ENCODE measurements at regions of chr9 and their contacts with region 1.

Region 1: DNA sequence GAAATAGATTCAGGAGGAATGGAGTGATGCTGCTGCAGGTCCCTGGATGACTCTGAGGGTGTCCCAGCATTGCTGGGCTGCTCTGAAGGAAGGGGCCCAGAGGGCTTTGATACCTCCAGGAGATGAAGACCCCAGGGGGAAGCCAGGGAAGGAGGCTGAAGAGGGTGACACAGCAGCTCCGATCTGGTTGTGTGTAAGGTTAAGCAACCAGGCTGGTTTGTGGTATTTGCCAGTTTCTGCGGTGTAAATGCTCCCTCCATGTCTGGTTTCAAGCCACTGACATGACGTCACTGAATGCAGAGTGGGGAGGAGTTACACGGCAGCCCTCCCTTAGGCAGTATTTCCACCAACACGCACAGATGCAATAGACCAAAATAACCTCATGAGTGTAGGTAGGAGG is 40.0 kb upstream of the ORM1 start:
- DNase-seq: no peak
- ATAC-seq: no peak
- H3K4me3 ChIP-seq: no peak overlapping the region
- H3K27ac ChIP-seq: no peak overlapping the region
- H3K4me1 ChIP-seq: peaks cover 0 to 16% (median 5%) of the 10 kb centered on the region in 9 donors
- H3K27me3 ChIP-seq: no peaks in the 10 kb centered on the region
- CTCF ChIP-seq: no peak

Region 2: GRCh38 chr9:114082017-114082762 is 200.7 kb before region 1 on chr9:
- intact Hi-C with region 1: loop called in 1 of 10 experiments (anchors 5 kb)
- DNase-seq: peak; percentile 74 to 88
- ATAC-seq: peak; percentile 86 to 96 (median 92)
- H3K4me3 ChIP-seq: no peak overlapping the region
- H3K27ac ChIP-seq: no peak overlapping the region
- H3K4me1 ChIP-seq: peaks cover 0 to 5% (median 0%) of the 10 kb centered on the region in 9 donors
- H3K27me3 ChIP-seq: peaks cover 0 to 26% (median 8%) of the 10 kb centered on the region in 7 donors
- CTCF ChIP-seq: peak; percentile 84 to 94 (median 89)

Region 3: DNA sequence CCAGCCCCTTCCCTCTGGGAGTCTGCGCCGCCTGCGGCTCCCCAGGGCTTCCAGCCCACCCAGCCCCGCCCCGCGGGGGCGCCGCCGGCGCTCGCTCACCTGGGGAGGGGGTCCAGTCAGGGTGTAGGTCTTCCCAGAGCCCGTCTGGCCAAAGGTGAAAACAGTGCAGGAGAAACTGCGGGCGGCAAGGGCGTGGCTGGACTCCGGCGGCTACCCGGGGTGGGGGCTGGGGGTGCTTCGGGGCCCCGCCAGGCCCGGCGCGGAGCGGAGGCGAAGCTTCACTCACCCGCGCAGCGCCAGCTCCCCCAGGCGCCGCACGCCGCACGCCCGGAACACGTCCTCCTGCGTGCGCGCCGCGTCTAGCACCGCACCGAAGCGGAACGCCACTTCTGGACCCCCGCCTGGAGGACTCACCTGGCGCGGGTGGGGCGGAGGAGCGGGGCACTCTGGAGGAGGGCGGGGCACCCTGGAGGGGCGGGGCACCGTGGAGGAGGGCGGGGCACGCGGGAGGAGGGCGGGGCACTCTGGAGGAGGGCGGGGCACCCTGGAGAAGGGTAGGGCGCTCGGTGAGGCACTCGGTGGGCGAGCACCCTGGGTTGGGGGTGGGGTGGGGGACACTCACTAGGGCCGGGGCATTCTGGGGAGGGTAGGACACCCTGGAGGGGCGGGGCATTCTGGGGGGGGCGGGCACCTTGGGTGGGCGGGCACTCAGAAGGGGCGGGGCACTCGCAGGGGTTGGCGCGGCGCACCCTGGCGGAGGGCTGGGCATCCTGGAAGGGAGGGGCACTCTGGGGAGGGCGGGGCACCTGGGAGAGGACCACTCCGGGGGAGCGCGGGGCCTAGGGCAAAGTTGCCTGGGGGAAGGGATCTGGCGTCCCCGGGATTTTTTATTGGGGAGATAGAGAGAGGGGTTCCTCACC is 184.7 kb before region 1 on chr9:
- intact Hi-C with region 1: loop called in 2 of 10 experiments (anchors 5 to 10 kb)
- DNase-seq: peak in 1 of 2 donors; percentile 39
- ATAC-seq: peak; percentile 39 to 79 (median 57)
- H3K4me3 ChIP-seq: peak overlapping the region in 9 of 10 donors; percentile 35 to 55 (median 46)
- H3K27ac ChIP-seq: no peak overlapping the region
- H3K4me1 ChIP-seq: peaks cover 0 to 16% (median 7%) of the 10 kb centered on the region in 9 donors
- H3K27me3 ChIP-seq: peaks cover 4 to 44% (median 40%) of the 10 kb centered on the region in 7 donors
- CTCF ChIP-seq: no peak